MCF 10A (cell line): ENCODE measurements at regions of chrX and their contacts with region 1.

Region 1: GRCh38 chrX:40792433-40792832 is 57.1 kb upstream of the MED14 start:
- DNase-seq: no peak
- H3K4me3 Mint-ChIP-seq: no peak overlapping the region
- H3K27ac Mint-ChIP-seq: no peak overlapping the region
- H3K4me1 Mint-ChIP-seq: peaks cover 9% of the 10 kb centered on the region
- H3K27me3 Mint-ChIP-seq: peaks cover 77% of the 10 kb centered on the region
- CTCF ChIP-seq: no peak

Region 2: DNA sequence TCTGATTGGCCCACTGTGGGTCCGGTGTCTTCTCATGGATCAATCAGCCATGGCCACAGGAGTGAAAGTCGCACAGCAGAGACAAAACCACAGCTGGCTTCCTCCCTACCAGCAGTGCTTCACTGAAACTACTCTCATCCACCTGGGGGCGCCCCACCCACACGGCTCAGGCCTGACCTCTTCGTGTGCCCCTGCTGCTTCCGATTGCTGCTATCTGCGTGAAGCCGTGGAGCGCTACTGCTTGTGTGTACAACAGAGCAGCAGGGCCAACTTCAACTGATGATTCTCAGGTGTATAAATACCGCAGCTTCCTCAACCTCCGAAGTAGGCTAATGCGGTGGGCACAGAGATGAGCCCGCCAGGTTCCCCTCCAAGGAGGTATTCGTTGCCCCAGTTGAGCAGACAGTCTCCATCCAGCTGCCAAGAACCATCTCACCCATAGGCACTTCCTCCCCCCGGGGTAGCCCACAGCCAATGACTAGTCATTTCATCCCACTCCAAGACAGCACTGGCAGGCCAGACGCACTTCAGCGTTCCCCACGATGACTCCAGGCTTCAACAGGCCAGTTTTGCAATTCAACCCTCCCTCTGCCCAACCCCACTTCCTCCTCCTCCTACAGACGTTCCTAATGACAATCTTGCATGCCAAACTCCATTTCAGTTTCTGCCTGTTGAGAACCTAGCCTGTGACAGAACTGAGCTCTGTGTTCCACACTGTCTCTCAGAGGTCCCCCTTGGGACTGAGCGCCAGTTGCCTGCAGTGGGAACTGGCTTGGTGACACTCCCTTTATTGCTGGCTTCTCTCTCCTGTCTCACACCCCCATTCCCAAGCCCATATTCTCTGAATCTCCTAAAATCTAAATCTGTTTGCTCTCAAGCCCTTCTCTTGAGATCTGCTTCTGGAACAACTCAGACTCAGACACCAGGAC is 253.0 kb before region 1 on chrX:
- CTCF ChIA-PET with region 1: no interaction called
- POLR2A ChIA-PET with region 1: no interaction called
- intact Hi-C with region 1: loop called (anchors 1 kb)
- DNase-seq: peak; percentile 27
- H3K4me3 Mint-ChIP-seq: no peak overlapping the region
- H3K27ac Mint-ChIP-seq: no peak overlapping the region
- H3K4me1 Mint-ChIP-seq: peaks cover 7% of the 10 kb centered on the region
- H3K27me3 Mint-ChIP-seq: peaks cover 86% of the 10 kb centered on the region
- CTCF ChIP-seq: no peak

Region 3: DNA sequence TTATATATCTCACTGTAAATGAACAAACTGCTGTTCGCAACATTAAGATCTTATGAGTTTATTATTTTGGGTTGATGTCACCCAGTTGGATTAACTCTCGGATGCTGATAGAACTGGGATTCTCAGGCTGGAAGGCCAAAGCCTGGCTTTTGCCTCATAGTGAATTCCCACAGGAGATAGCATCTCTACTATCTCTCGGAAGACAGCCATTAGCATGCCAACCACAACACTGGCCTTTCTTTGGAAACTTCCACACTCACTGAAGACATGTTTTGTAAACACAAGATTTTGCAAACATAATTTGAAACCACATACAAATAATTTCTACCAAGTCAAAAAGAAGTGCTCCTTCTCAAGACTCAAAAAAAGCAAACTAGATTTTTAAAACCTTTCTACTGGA is 216.1 kb before region 1 on chrX:
- CTCF ChIA-PET with region 1: no interaction called
- POLR2A ChIA-PET with region 1: no interaction called
- intact Hi-C with region 1: no loop called
- DNase-seq: no peak
- H3K4me3 Mint-ChIP-seq: no peak overlapping the region
- H3K27ac Mint-ChIP-seq: no peak overlapping the region
- H3K4me1 Mint-ChIP-seq: peaks cover 5% of the 10 kb centered on the region
- H3K27me3 Mint-ChIP-seq: peaks cover 55% of the 10 kb centered on the region
- CTCF ChIP-seq: no peak

Region 4: DNA sequence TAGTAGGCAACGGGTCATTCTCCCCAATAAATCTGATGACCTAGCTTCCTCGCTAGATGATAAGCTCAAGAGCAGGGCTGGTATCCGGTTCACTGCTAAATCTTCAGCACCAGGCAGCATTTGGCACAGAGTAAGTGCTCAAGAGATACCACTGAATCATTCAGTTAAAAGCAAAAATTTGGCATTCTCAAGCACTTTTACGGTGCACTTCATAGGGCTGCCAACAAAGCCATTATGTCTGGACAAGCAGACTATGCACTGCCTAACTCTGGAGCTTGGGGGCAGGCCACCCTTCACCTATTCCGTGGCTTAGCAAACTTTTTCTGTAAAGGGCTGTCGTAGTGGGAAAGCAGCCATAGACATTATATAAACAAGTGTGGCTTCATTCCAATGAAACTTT is 121.3 kb before region 1 on chrX:
- CTCF ChIA-PET with region 1: interaction called, 12 read pairs
- POLR2A ChIA-PET with region 1: no interaction called
- intact Hi-C with region 1: no loop called
- DNase-seq: no peak
- H3K4me3 Mint-ChIP-seq: no peak overlapping the region
- H3K27ac Mint-ChIP-seq: no peak overlapping the region
- H3K4me1 Mint-ChIP-seq: no peaks in the 10 kb centered on the region
- H3K27me3 Mint-ChIP-seq: peaks cover 31% of the 10 kb centered on the region
- CTCF ChIP-seq: no peak

Region 5: DNA sequence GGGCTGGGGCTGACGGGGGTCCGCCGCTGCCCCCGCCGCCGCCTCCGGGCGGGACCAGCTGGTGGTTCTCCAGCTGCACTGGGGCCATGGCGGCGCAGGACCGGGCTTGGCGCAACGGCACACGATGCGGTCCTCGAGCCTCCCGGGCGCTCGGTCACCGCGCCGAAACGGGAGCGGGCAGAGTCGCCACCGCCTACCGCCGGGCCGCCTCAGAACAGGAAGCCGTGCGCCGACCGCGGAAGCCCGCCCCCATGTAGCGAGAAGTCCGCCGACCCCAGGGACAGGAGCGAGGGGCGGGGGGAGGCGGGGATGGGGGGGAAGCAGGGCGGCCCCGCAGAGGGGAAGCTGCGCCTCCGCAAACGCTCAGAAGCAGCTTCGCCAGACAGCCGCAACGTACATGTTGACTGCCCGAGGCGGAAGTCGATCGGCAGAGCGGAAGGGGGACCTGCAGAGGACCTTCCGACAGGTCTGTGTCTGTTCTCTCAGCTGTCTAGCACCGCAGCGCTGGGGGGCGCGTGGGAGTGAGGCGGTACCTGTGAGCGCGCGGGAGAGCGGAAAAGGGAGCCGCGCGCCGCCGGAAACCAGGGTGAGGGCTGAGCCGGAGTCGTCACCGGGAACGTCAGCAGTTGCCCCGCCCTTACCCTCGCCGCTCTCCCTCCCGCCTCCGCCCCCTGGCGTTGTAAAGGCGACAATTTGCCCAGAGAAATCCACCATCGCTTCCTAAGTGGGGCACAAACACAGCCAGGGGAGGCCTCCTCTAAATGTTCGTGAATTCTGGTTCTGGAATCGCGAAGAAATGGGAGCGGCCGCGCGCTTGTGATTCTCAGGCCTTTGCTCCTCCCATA is 56.9 kb before region 1 on chrX and contains the start of gene MED14:
- CTCF ChIA-PET with region 1: interaction called, 7 read pairs
- POLR2A ChIA-PET with region 1: interaction called, 8 read pairs
- intact Hi-C with region 1: loop called (anchors 5 kb)
- DNase-seq: peak; percentile 90
- H3K4me3 Mint-ChIP-seq: peak within 1 kb of the TSS; percentile 94
- H3K27ac Mint-ChIP-seq: peak within 1 kb of the TSS; percentile 96
- H3K4me1 Mint-ChIP-seq: peaks cover 24% of the 10 kb centered on the region
- H3K27me3 Mint-ChIP-seq: peaks cover 51% of the 10 kb centered on the region
- CTCF ChIP-seq: peak; percentile 68
- total RNA-seq, gene MED14: 35.6 and 36.4 TPM in 2 replicates

Region 6: DNA sequence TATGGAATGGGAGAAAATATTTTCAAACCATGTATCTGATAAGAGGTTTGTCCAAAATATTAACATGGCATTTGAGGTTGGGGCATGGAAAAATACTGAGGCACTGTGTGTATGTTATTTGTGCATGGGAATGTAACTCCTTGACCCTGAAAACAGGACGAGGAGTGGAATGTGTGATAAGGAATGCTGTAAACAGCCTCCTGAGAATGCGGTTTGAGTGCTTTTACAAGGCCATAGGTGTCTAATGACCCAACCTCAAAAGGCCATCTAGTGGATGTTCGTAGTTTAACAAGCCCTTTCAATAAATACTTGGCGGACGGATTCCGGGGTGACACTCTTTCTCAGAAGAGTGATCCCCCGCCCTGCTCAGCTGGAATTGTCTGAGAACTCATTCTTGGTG is 129.9 kb after region 1 on chrX:
- CTCF ChIA-PET with region 1: interaction called, 4 read pairs
- POLR2A ChIA-PET with region 1: no interaction called
- intact Hi-C with region 1: loop called (anchors 10 kb)
- DNase-seq: peak; percentile 69
- H3K4me3 Mint-ChIP-seq: no peak overlapping the region
- H3K27ac Mint-ChIP-seq: no peak overlapping the region
- H3K4me1 Mint-ChIP-seq: no peaks in the 10 kb centered on the region
- H3K27me3 Mint-ChIP-seq: peaks cover 72% of the 10 kb centered on the region
- CTCF ChIP-seq: peak; percentile 38